ENCODE measurements at regions of chr7 and their contacts with region 1.

Region 1: DNA sequence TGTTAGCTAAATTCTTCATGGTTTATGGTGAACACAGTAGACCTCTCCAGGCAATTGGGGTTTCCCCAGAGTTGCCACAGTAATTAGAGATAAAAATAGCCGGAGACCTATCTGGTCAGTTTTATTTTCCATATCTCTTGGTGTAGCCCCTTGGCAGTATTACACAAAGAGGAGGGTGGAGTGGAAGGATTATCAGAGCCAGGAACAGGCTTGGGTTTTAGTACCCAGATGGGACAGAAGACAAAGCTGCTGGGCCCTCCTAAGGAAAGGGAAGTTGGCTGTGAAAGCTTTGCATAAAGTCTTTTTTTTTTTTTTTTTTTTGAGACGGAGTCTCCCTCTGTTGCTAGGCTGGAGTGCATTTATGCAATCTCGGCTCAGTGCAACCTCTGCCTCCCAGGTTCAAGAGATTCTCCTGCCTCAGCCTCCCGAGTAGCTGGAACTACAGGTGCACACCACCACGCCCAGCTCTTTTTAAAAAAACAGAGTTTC is 9.7 kb downstream of the ZSCAN21 start:
- DNase-seq: no peak
- ATAC-seq: no peak
- H3K4me3 ChIP-seq: no peak overlapping the region
- H3K27ac ChIP-seq: no peak overlapping the region
- H3K4me1 ChIP-seq: no peaks in the 10 kb centered on the region
- H3K27me3 ChIP-seq: no peaks in the 10 kb centered on the region
- CTCF ChIP-seq: no peak

Region 2: DNA sequence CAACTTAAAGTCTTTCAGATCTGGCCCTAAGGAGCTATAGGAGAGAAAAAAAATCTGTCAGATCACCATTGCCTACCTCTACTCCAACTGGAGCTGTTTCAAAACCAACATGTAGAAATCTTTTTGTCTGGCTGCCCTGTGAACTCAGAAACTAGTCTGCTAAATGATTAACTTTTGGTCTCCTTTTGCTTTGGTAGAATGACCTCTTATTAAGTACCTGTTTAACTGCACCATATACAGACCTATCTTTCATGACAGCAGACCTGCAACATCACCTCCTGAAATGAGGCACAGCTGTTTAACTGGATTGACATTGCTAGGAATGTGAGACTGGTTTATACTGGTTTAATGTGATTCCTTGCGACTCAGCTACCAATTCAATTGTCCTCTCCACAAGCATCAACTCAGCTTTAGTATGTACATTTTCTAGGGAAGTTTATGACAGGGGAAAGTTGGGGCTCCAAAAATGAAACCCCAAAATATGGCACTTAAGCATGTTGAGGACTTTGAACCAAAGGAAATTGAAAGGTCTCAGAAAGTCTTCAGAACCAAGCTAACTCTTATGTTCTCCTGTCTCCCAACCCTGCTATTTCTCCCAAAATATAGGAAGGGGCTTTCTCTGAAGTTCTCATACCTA is 229.7 kb before region 1 on chr7:
- CTCF ChIA-PET with region 1: no interaction called
- POLR2A ChIA-PET with region 1: no interaction called
- in situ Hi-C with region 1: no loop called
- intact Hi-C with region 1: no loop called
- DNase-seq: no peak
- ATAC-seq: no peak
- H3K4me3 ChIP-seq: no peak overlapping the region
- H3K27ac ChIP-seq: no peak overlapping the region
- H3K4me1 ChIP-seq: no peaks in the 10 kb centered on the region
- H3K27me3 ChIP-seq: peaks cover 23% of the 10 kb centered on the region
- CTCF ChIP-seq: no peak

Region 3: DNA sequence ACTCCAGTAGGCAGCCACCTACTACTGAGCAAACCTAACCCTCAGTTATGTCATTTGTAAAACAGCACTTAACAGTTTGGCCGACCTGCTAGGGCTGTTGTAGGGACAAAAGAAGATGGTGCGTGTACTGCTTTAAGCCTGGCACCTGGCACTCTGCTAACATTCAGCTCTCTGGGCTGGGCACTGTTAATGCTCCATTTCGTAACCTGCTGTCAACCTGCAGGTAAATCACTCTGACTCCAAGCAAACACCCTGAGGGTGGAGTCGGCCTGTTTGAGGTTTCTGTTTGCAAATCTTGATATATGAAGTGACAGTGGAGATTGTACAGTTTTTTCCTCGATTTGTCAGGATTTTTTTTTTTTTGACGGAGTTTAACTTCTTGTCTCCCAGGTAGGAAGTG is 36.6 kb before region 1 on chr7:
- CTCF ChIA-PET with region 1: no interaction called
- POLR2A ChIA-PET with region 1: interaction called, 10 read pairs
- in situ Hi-C with region 1: no loop called
- intact Hi-C with region 1: no loop called
- DNase-seq: no peak
- ATAC-seq: no peak
- H3K4me3 ChIP-seq: no peak overlapping the region
- H3K27ac ChIP-seq: no peak overlapping the region
- H3K4me1 ChIP-seq: peaks cover 4% of the 10 kb centered on the region
- H3K27me3 ChIP-seq: no peaks in the 10 kb centered on the region
- CTCF ChIP-seq: no peak

Region 4: DNA sequence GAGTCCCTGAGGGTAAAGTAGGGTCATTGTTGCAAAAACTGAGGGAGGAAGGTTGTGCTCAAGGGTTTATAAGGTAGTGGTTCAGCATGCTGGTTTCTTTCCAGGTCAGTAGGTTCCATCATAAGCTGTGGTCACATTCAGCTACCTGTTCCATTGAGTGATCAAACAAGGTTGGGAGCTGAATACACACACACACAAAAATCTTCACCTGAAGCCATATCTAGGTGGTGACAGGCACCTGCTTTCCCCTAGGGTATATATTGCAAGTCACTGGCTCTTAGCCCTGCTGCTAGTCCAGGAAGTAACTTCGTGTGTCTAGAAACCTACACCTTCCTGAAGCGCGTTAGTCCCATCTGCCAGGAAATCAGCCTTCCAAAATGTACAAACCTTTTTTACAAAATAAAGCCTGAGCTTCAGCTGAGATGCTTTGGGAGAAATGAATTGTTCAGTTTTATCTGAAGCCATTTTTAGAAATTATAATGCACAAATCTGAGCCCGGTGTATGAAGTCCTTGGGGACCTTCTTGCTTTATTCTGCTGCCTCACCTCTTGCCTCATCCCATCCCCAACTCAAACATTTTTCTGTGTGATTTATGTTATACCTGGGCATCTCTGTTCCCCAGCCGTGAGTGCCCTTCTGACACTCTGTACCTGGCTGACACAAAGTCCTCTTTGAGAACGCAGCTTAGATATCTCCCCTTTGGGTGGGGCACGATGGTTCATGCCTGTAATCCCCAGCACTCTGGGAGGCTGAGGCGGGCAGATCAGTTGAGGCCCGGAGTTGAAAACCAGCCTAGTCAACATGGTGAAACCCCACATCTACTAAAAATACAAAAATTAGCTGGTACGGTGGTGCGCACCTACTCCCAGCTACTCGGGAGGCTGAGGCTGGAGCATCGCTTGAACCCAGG is 78.8 kb after region 1 on chr7:
- CTCF ChIA-PET with region 1: no interaction called
- POLR2A ChIA-PET with region 1: no interaction called
- in situ Hi-C with region 1: no loop called
- intact Hi-C with region 1: no loop called
- DNase-seq: no peak
- ATAC-seq: no peak
- H3K4me3 ChIP-seq: no peak overlapping the region
- H3K27ac ChIP-seq: no peak overlapping the region
- H3K4me1 ChIP-seq: no peaks in the 10 kb centered on the region
- H3K27me3 ChIP-seq: no peaks in the 10 kb centered on the region
- CTCF ChIP-seq: no peak